ENCODE measurements at regions of chr1 and their contacts with region 1.

Region 1: GRCh38 chr1:48683839-48684238 is 92.9 kb downstream of the BEND5 start:
- DNase-seq: no peak
- H3K4me3 ChIP-seq: no peak overlapping the region
- H3K27ac ChIP-seq: peak overlapping the region in 1 of 5 donors; percentile 27
- H3K4me1 ChIP-seq: peaks cover 19% of the 10 kb centered on the region in 2 donors
- H3K27me3 ChIP-seq: no peaks in the 10 kb centered on the region
- CTCF ChIP-seq: no peak
- POLR2A ChIP-seq: no peak

Region 2: GRCh38 chr1:48667782-48668181 is 16.1 kb before region 1 on chr1:
- intact Hi-C with region 1: loop called in 1 of 2 experiments (anchors 1 kb)
- DNase-seq: no peak
- H3K4me3 ChIP-seq: no peak overlapping the region
- H3K27ac ChIP-seq: no peak overlapping the region
- H3K4me1 ChIP-seq: no peaks in the 10 kb centered on the region
- H3K27me3 ChIP-seq: no peaks in the 10 kb centered on the region
- CTCF ChIP-seq: no peak
- POLR2A ChIP-seq: no peak

Region 3: DNA sequence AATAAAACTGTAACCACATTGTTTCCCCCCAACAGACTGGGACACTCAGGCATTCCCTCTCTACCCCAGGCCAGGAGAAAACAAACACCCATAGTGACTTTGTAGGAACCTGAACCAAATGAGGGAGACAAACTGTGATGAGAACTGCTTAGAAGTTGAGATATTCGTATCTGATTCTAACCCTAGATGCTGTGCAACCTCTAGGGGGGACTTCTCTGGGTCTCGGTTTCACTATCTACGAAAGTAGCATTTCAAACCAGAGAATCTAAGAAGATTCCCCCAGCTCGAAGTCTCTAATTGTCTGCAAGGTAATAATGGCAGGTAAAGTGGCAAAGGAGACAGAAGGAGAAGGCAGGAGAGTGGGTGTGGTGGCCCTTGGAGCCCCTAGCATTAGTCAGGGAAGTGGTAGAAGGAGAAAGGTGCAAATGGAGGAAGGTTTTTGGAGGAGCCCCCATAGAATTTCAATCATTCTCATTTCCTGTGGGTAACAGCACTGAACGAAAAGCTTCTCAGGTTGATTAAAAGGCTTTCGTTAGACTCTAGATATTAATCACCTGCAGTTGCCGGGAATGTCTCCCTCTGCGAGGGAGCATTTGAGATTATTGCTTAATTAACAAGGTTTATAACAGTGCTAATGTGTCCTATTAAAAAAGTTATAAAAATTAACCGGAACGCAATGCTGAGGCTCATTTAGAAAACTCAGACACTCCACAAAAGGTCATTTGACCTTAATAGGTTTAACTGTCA is 46.5 kb after region 1 on chr1:
- intact Hi-C with region 1: no loop called
- DNase-seq: no peak
- H3K4me3 ChIP-seq: no peak overlapping the region
- H3K27ac ChIP-seq: no peak overlapping the region
- H3K4me1 ChIP-seq: no peaks in the 10 kb centered on the region
- H3K27me3 ChIP-seq: no peaks in the 10 kb centered on the region
- CTCF ChIP-seq: no peak
- POLR2A ChIP-seq: no peak

Measured in adrenal gland (tissue), 19 donors.